Prostate gland (tissue), 2 donors: ENCODE measurements at regions of chr11 and their contacts with region 1.

Region 1: GRCh38 chr11:124592627-124593026 is 18.6 kb upstream of the PANX3 start:
- DNase-seq: no peak
- H3K4me3 ChIP-seq: no peak overlapping the region
- H3K27ac ChIP-seq: no peak overlapping the region
- H3K4me1 ChIP-seq: no peaks in the 10 kb centered on the region
- H3K27me3 ChIP-seq: peaks cover 2% of the 10 kb centered on the region
- CTCF ChIP-seq: no peak
- POLR2A ChIP-seq: no peak

Region 2: GRCh38 chr11:124070915-124071635 is 521.6 kb before region 1 on chr11:
- intact Hi-C with region 1: loop called (anchors 10 kb)
- DNase-seq: no peak
- H3K4me3 ChIP-seq: no peak overlapping the region
- H3K27ac ChIP-seq: no peak overlapping the region
- H3K4me1 ChIP-seq: no peaks in the 10 kb centered on the region
- H3K27me3 ChIP-seq: peaks cover 4% of the 10 kb centered on the region
- CTCF ChIP-seq: peak; percentile 11 to 84 (median 56)
- POLR2A ChIP-seq: no peak